ENCODE measurements at regions of chr10 and their contacts with region 1.

Region 1: DNA sequence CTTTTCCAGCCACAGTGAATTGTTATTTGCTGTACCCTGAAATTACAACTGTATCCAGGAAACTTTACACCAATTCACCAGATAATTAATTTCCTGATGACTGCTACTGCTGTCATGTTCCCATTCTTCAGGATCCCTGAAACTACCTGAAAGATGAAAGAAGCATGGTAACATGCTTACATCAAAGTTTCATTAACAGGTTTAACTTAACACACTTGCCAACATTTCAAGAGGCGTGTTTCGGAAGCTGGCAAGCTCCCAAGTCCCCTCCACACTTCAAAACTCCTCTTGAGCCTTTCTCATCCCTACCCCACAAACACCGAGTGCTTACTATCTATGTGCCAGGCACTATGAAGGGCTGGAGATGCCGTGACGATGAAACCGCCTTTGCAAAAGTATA is 88.6 kb downstream of the MPP7 start:
- DNase-seq: no peak
- H3K4me3 ChIP-seq: no peak overlapping the region
- H3K27ac ChIP-seq: no peak overlapping the region
- H3K4me1 ChIP-seq: no peaks in the 10 kb centered on the region
- H3K27me3 ChIP-seq: no peaks in the 10 kb centered on the region
- CTCF ChIP-seq: no peak

Region 2: GRCh38 chr10:27699776-27700175 is 514.4 kb before region 1 on chr10:
- CTCF ChIA-PET with region 1: no interaction called
- POLR2A ChIA-PET with region 1: interaction called, 12 read pairs
- intact Hi-C with region 1: no loop called
- DNase-seq: no peak
- H3K4me3 ChIP-seq: no peak overlapping the region
- H3K27ac ChIP-seq: no peak overlapping the region
- H3K4me1 ChIP-seq: no peaks in the 10 kb centered on the region
- H3K27me3 ChIP-seq: no peaks in the 10 kb centered on the region
- CTCF ChIP-seq: no peak